HEK293 (cell line): ENCODE measurements at regions of chr6 and their contacts with region 1.

Region 1: DNA sequence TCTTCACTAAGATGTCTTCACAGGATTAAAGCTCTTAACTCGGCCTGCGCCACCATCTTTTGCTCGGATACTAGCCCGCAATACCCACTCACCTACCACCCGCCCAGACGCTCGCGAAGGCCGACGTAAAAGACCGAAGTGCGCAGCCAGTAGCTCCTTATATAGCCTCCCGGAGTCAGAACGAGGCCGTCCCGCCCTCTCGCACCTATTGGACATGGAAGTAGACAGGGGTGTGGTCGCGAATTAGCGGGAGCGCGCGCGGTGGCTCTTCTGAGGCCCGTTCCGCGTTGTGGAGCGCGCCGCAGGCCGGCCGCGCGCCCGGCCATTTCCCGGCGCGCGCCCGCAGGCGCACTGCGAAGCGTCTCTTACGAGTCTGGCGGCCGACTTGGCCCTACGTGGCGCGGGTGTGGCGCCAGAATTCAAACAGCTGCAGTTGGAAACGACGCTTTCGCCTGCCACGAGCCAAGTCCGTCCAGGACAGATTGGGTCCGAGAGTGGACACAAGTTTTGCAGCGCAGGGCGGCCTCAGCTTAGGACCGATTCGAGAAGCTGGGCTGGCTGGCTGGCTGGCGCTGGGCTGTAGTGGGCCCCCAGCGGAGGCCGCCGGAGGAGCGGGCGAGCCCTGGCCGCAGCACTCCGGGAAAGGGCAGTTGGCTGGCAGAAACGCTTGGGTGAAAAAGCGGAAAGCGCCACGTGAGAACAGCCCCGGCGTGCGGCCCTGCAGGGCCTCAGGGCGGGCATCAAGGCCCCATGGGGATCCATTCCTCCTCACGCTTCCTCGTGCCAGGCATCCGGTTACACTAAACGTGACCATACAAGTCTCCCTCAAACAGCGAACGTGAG is 36.1 kb upstream of the SYNCRIP start:
- H3K4me3 ChIP-seq: peak overlapping the region; percentile 85
- H3K27ac ChIP-seq: peak overlapping the region; percentile 85
- H3K4me1 ChIP-seq: 0 out of 2 replicates have a peak, but pooled peaks cover 7% of the 10 kb centered on the region
- CTCF ChIP-seq: peak; percentile 82

Region 2: DNA sequence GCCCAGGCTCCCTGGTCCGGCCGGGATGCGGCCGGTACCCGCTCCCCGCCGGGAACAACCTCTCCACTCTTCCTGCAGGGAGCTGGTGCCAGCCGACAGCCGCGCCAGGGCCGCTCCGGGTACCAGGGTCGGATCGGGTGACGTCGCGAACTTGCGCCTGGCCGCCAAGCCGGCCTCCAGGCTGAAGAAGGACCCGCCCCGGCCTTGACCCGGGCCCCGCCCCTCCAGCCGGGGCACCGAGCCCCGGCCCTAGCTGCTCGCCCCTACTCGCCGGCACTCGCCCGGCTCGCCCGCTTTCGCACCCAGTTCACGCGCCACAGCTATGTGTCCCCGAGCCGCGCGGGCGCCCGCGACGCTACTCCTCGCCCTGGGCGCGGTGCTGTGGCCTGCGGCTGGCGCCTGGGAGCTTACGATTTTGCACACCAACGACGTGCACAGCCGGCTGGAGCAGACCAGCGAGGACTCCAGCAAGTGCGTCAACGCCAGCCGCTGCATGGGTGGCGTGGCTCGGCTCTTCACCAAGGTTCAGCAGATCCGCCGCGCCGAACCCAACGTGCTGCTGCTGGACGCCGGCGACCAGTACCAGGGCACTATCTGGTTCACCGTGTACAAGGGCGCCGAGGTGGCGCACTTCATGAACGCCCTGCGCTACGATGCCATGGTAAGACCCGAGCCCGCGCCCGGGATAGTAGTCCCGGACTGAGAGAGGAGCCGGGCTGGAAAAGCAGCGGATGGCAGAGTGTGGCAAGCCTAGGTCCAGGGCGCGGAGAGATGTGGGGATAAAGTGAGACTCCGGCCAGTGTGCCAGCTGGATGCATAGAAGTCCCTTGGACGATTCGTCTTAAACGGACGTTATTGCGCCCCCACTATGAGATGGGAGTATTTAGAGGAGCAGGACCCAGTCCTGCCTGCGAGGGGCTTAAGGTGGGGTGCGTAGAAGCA is 228.7 kb before region 1 on chr6 and contains the start of gene NT5E:
- CTCF ChIA-PET with region 1: no interaction called
- POLR2A ChIA-PET with region 1: interaction called, 29 read pairs
- H3K4me3 ChIP-seq: peak within 1 kb of the TSS; percentile 57
- H3K27ac ChIP-seq: peak within 1 kb of the TSS; percentile 25; the same call in 1 of the 2 replicates
- H3K4me1 ChIP-seq: peaks cover 11% of the 10 kb centered on the region
- CTCF ChIP-seq: peak; percentile 94

Region 3: DNA sequence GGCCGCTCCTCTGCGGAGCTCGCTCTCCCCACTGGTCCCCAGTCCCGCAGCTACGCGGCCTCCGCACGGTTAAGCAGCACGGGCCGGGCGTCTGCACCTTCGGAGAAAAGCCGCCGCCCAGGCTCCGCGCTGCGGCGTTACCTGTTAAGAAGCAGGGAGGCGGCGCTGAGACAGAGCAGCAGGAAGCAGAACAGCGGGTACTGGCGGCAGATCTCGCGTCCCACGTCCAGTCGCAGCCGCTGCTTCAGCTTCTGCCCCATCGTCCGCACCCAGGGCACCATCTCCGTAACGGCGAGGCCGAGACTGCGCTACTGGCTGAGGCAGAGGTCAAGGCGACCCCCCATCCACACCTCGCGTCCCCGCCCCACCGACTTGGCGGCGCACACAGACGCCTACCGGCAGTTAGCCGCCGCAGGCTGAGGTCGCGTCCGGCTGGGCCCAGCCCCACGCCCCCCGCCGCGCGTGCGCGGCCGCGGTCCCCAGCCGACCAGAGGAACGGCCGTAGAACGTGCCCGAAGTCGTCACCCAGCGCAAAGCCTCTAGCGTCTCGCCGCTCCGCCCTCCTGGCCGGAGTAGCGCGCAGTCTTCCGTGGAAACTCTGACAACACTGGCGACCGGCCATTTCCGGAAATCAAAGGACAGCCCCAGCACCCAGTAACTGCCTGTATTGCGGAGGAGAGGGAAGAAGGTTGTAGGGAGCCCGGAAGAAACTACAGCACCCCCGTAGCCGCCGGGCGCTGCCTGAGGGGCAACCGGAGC is 85.2 kb before region 1 on chr6 and contains the start of gene SNX14:
- CTCF ChIA-PET with region 1: interaction called, 7 read pairs
- POLR2A ChIA-PET with region 1: interaction called, 83 read pairs
- H3K4me3 ChIP-seq: peak within 1 kb of the TSS; percentile 91
- H3K27ac ChIP-seq: peak within 1 kb of the TSS; percentile 74
- H3K4me1 ChIP-seq: no peaks in the 10 kb centered on the region
- CTCF ChIP-seq: peak; percentile 86

Region 4: DNA sequence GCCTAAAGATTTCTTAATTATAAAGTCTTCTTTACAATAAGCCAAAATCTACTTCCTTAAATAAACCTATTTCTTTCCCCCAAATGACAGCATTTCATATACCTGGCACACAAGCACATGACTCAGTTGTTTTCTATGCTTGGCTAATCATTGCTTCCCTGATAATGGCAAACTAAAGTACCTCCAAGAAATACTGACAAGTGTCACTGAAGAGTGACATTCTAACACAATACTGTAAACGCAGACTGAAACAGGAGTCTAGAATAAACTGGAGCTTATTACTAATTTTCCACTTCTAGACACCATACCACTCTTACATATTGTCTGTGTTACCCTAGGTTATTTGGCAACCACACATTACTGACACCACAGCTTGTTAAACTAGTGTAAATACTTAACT is 50.5 kb before region 1 on chr6:
- CTCF ChIA-PET with region 1: interaction called, 3 read pairs
- POLR2A ChIA-PET with region 1: interaction called, 22 read pairs
- H3K4me3 ChIP-seq: no peak overlapping the region
- H3K27ac ChIP-seq: no peak overlapping the region
- H3K4me1 ChIP-seq: no peaks in the 10 kb centered on the region
- CTCF ChIP-seq: no peak

Region 5: GRCh38 chr6:85650606-85651005 is 28.2 kb before region 1 on chr6:
- CTCF ChIA-PET with region 1: interaction called, 9 read pairs
- POLR2A ChIA-PET with region 1: interaction called, 510 read pairs
- H3K4me3 ChIP-seq: no peak overlapping the region
- H3K27ac ChIP-seq: no peak overlapping the region
- H3K4me1 ChIP-seq: no peaks in the 10 kb centered on the region
- CTCF ChIP-seq: no peak

Region 6: DNA sequence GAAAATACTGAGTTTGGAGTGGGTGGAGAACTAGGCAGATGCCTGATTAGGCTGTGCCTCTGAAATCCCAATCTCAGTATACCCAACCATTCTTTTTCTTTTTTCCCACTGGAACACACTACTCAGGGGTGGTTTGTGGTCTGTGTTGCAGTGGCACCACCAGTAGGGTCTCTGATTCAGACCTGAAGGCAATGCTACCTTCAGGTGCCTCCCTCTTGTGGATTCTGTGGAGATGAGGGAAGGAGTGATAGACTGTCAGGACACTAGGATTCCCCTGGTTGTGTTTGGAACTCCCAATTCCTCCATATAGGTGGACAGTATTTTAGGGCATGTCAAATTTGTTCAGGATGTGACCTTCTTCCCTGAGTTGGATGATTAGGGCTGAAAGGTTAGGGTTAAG is 11.2 kb after region 1 on chr6:
- CTCF ChIA-PET with region 1: interaction called, 5 read pairs
- POLR2A ChIA-PET with region 1: interaction called, 11 read pairs
- H3K4me3 ChIP-seq: no peak overlapping the region
- H3K27ac ChIP-seq: no peak overlapping the region
- H3K4me1 ChIP-seq: no peaks in the 10 kb centered on the region
- CTCF ChIP-seq: no peak

Region 7: DNA sequence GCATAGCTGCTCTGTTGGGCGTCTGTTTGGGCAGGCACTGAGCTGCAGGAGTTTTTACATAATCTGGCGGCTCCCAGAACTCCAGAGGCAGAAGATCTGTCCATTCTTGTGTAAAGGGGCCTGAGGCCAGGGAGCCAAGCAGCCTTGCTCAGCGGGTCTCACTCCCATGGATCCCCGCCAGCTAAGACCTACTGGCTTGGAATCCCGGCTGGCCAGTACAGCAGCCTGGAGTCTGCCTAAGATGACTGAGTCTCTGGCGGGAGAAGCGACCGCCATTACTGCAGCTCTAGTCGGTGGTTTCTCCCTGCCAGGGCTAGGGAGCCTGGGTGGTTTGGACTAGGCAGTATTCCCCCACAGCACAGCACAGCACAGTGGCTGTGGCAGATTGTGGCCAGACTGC is 232.2 kb after region 1 on chr6:
- CTCF ChIA-PET with region 1: no interaction called
- POLR2A ChIA-PET with region 1: no interaction called
- H3K4me3 ChIP-seq: no peak overlapping the region
- H3K27ac ChIP-seq: no peak overlapping the region
- H3K4me1 ChIP-seq: no peaks in the 10 kb centered on the region
- CTCF ChIP-seq: no peak